ENCODE measurements at regions of chr18 and their contacts with region 1.

Region 1: GRCh38 chr18:49849331-49850217 is 36.2 kb upstream of the ACAA2 start:
- DNase-seq: no peak
- H3K4me3 ChIP-seq: no peak overlapping the region
- CTCF ChIP-seq: no peak
- POLR2A ChIP-seq: no peak

Region 2: GRCh38 chr18:49548229-49548636 is 301.3 kb before region 1 on chr18:
- intact Hi-C with region 1: no loop called
- DNase-seq: peak in 1 of 2 donors; percentile 7
- H3K4me3 ChIP-seq: no peak overlapping the region
- CTCF ChIP-seq: no peak
- POLR2A ChIP-seq: no peak

Region 3: GRCh38 chr18:49561289-49562193 is 288.0 kb before region 1 on chr18 and contains the start of gene LIPG:
- intact Hi-C with region 1: loop called (anchors 5 kb)
- DNase-seq: peak in 1 of 2 donors; percentile 22
- H3K4me3 ChIP-seq: no peak within 1 kb of the TSS
- CTCF ChIP-seq: no peak
- POLR2A ChIP-seq: no peak
- total RNA-seq, gene LIPG: 0.23 to 3.6 (median 2.0) TPM

Region 4: DNA sequence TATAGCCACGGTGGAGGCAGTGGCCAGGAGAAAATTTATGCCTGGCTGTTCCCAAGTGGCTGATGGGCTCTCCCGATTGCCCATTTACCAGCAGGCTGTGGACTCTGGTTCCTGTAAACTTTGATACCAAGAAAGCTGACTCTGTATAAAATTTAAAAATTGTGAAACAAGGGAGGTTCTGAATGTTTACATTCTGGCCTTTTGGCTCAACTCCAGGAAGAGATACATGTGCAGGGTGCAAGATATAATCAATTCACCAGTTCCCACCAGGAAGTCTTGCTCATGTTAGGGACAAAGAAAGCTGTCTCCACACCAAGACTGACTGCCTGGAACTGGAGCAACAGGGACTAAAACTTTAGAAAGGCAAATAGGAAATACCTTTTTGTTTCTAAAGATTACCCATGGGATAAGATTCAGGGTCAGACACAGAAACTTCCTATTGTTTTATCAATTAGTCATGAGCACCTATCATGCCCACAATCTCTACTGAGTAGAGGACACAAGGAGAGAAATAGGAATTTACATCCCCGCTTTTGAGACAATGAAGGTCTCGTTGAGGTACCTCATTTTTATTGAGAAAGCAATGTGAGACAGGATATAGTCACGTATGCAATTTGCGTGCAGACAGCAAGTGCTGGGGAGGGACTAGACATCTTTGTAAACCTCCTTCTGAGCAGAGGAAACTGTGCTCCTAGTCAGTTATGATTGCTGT is 164.2 kb before region 1 on chr18:
- intact Hi-C with region 1: no loop called
- DNase-seq: no peak
- H3K4me3 ChIP-seq: no peak overlapping the region
- CTCF ChIP-seq: no peak
- POLR2A ChIP-seq: no peak

Measured in lower leg skin (tissue), 4 donors.